CD4-positive, alpha-beta memory T cell (primary cell): ENCODE measurements at regions of chr19 and their contacts with region 1.

Region 1: DNA sequence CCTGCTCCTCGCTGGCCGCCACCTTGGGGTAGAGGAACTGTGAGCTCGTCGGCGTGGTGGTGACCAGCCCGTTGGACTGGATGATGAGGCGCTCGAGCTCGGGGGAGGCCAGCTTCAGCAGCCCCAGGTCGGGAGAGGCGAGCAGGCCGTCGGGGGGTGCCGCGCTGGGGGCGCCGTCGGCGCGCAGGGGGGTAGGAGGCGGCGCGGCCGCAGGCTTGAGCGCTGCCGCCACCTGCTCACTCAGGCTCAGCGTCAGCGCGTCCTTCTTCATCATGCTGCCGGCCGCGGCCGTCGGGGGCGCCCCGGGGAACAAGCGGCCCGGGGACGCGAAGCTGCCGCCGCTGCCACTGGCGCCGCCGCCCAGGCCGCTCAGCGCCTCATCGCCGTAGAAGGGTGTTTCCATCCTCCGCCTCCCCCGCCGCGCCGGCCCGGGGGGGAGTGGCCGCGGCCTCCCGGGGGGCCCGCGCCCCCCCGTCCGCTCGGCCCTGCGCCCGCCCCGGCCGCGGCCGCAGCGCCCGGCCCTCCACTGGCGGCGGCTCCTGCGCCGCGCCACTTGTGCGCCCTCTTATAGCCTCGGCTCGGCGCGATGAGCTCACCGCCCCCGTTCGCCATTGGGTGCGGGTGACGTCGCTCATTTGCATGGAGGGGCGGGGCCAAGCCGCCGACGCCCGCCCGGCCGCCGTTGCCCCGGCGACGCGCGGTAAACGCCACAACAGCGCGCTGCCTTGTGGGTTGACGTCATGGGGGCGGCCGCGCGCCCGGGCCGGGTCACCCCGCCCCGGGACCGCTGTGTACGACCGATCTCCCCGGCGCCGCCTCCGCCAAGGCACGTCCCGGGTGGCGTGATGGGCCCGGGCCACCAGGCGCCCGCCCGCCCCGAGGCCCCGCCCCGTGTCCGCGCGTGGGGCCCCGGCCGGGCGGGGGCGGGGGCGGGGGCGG is at the start of gene JUND:
- DNase-seq: peak; percentile 97 to 99 (median 99)
- H3K4me3 ChIP-seq: peak within 1 kb of the TSS; percentile 79 to 85
- H3K4me3 Mint-ChIP-seq: peak within 1 kb of the TSS; percentile 88 to 99 (median 96)
- H3K27ac ChIP-seq: peak within 1 kb of the TSS; percentile 98
- H3K27ac Mint-ChIP-seq: peak within 1 kb of the TSS; percentile 97 to 100 (median 98)
- H3K4me1 ChIP-seq: peaks cover 50% of the 10 kb centered on the region
- H3K4me1 Mint-ChIP-seq: peaks cover 30 to 60% (median 46%) of the 10 kb centered on the region in 4 donors
- H3K27me3 ChIP-seq: no peaks in the 10 kb centered on the region
- H3K27me3 Mint-ChIP-seq: peaks cover 0 to 6% of the 10 kb centered on the region in 2 donors
- total RNA-seq, gene JUND: 163 TPM

Region 2: GRCh38 chr19:18117692-18118378 is 163.5 kb before region 1 on chr19:
- CTCF ChIA-PET with region 1: interaction called, 3 read pairs
- POLR2A ChIA-PET with region 1: interaction called, 35 read pairs
- intact Hi-C with region 1: no loop called
- DNase-seq: peak; percentile 92 to 97 (median 96)
- H3K4me3 ChIP-seq: peak overlapping the region; percentile 63 to 64
- H3K4me3 Mint-ChIP-seq: peak overlapping the region; percentile 88 to 98 (median 95)
- H3K27ac ChIP-seq: peak overlapping the region; percentile 85
- H3K27ac Mint-ChIP-seq: peak overlapping the region; percentile 89 to 99 (median 96)
- H3K4me1 ChIP-seq: peaks cover 44% of the 10 kb centered on the region
- H3K4me1 Mint-ChIP-seq: peaks cover 18 to 45% (median 31%) of the 10 kb centered on the region in 4 donors
- H3K27me3 ChIP-seq: no peaks in the 10 kb centered on the region
- H3K27me3 Mint-ChIP-seq: no peaks in the 10 kb centered on the region

Region 3: GRCh38 chr19:18224525-18225354 is 56.6 kb before region 1 on chr19:
- CTCF ChIA-PET with region 1: interaction called, 5 read pairs
- POLR2A ChIA-PET with region 1: interaction called, 10 read pairs
- intact Hi-C with region 1: no loop called
- DNase-seq: peak; percentile 79 to 83 (median 81)
- H3K4me3 ChIP-seq: peak overlapping the region; percentile 28 to 45
- H3K4me3 Mint-ChIP-seq: peak overlapping the region; percentile 83 to 91 (median 90)
- H3K27ac ChIP-seq: no peak overlapping the region
- H3K27ac Mint-ChIP-seq: peak overlapping the region in 3 of 7 donors; percentile 66 to 77 (median 74)
- H3K4me1 ChIP-seq: peaks cover 26% of the 10 kb centered on the region
- H3K4me1 Mint-ChIP-seq: peaks cover 12 to 30% (median 22%) of the 10 kb centered on the region in 4 donors
- H3K27me3 ChIP-seq: peaks cover 26% of the 10 kb centered on the region
- H3K27me3 Mint-ChIP-seq: peaks cover 48 to 55% of the 10 kb centered on the region in 2 donors

Region 4: GRCh38 chr19:18310118-18310909 is 29.0 kb after region 1 on chr19:
- CTCF ChIA-PET with region 1: interaction called, 255 read pairs
- POLR2A ChIA-PET with region 1: interaction called, 1,691 read pairs
- intact Hi-C with region 1: no loop called
- DNase-seq: no peak
- H3K4me3 ChIP-seq: no peak overlapping the region
- H3K4me3 Mint-ChIP-seq: no peak overlapping the region
- H3K27ac ChIP-seq: no peak overlapping the region
- H3K27ac Mint-ChIP-seq: no peak overlapping the region
- H3K4me1 ChIP-seq: peaks cover 34% of the 10 kb centered on the region
- H3K4me1 Mint-ChIP-seq: peaks cover 12 to 37% (median 25%) of the 10 kb centered on the region in 4 donors
- H3K27me3 ChIP-seq: no peaks in the 10 kb centered on the region
- H3K27me3 Mint-ChIP-seq: no peaks in the 10 kb centered on the region

Region 5: DNA sequence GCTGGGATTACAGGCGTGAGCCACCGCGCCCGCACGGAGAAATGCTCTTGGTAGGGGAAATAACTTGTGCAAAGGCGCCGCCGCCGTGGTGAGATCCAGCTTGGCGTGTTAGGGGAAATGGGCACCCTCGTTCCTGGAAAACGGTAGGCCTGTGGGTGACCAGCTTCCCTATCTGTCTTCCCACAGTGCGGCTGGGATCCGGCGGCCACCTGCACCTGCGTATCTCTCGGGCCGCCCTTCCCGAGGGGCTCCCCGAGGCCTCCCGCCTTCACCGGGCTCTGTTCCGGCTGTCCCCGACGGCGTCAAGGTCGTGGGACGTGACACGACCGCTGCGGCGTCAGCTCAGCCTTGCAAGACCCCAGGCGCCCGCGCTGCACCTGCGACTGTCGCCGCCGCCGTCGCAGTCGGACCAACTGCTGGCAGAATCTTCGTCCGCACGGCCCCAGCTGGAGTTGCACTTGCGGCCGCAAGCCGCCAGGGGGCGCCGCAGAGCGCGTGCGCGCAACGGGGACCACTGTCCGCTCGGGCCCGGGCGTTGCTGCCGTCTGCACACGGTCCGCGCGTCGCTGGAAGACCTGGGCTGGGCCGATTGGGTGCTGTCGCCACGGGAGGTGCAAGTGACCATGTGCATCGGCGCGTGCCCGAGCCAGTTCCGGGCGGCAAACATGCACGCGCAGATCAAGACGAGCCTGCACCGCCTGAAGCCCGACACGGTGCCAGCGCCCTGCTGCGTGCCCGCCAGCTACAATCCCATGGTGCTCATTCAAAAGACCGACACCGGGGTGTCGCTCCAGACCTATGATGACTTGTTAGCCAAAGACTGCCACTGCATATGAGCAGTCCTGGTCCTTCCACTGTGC is 107.0 kb after region 1 on chr19:
- CTCF ChIA-PET with region 1: interaction called, 17 read pairs
- POLR2A ChIA-PET with region 1: interaction called, 11 read pairs
- intact Hi-C with region 1: no loop called
- DNase-seq: peak; percentile 61 to 73 (median 67)
- H3K4me3 ChIP-seq: peak overlapping the region in 1 of 2 donors; percentile 31
- H3K4me3 Mint-ChIP-seq: peak overlapping the region; percentile 64 to 80 (median 76)
- H3K27ac ChIP-seq: no peak overlapping the region
- H3K27ac Mint-ChIP-seq: peak overlapping the region in 1 of 7 donors; percentile 12
- H3K4me1 ChIP-seq: peaks cover 7% of the 10 kb centered on the region
- H3K4me1 Mint-ChIP-seq: peaks cover 2 to 14% (median 6%) of the 10 kb centered on the region in 4 donors
- H3K27me3 ChIP-seq: peaks cover 21% of the 10 kb centered on the region
- H3K27me3 Mint-ChIP-seq: peaks cover 8 to 10% of the 10 kb centered on the region in 2 donors